ENCODE measurements at regions of chr1 and their contacts with region 1.

Region 1: DNA sequence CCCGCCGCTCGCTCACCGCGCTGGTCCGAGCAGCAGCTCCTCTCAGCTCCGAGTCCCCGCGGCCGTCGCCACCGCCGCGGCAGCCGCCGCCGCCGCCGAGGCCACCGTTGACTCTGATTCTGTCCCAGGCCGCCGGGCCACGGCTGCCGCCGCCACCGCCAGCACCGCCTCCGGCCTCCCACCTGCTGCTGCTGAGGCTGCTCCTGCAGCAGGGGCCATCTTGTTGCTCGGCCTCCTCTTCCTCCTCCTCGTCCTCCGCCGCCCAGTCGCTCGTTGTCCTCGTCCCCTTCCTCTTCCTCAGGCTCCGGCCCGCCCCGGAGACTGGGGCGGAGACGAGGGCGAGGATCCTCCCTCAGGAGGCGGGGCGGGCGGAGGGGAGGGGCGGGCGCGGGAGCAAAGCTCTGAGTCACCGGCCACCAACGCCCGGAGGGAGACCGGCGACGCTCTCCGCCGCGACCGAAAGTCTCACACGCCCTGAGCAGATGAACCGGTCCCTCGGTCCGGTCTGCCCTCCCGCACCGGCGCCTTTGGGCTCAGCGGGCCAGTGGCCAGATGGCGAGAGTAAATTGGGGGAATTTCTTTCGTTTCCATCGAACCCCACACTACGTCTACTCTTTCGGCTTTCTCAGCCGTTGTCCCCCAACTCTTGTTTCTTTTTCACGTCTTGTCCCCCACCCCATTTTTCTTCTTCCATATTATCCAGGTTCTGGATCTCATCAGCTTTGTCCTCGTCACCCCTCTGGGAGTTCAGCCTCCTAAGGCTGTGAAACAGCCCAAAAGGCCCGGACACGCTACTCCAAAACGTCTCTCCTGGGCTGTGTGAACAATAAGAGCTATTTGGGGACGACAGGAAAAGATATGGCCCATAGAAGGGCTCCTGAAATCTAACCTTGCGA is at the start of gene RC3H1:
- DNase-seq: peak; percentile 95
- H3K4me3 ChIP-seq: peak within 1 kb of the TSS; percentile 76 to 93 (median 85)
- H3K27ac ChIP-seq: peak within 1 kb of the TSS; percentile 95 to 99 (median 98)
- H3K4me1 ChIP-seq: peaks cover 40 to 47% (median 44%) of the 10 kb centered on the region in 4 donors
- H3K27me3 ChIP-seq: no peaks in the 10 kb centered on the region
- CTCF ChIP-seq: no peak
- EP300 ChIP-seq: no peak
- POLR2A ChIP-seq: peak; percentile 98
- total RNA-seq, gene RC3H1: 17.9 to 37.9 (median 33.1) TPM

Region 2: DNA sequence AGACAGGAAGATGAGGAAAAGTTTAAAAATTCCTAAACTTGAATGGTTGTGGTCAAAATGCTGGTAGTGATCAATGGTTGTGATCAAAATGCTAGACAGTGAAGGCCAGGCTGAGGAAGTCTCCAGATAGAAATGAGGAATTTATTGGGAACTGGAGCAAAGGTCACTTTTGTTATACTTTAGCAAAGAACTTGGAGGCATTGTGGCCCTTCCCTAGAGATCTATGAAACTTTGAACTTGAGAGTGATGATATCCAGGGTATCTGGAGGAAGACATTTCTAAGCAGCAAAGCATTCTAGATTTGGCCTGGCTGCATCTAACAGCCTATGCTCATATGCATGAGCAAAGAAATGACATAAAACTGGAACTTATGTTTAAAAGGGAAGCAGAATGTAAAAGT is 101.5 kb after region 1 on chr1:
- in situ Hi-C with region 1: no loop called
- intact Hi-C with region 1: no loop called
- DNase-seq: no peak
- H3K4me3 ChIP-seq: no peak overlapping the region
- H3K27ac ChIP-seq: no peak overlapping the region
- H3K4me1 ChIP-seq: no peaks in the 10 kb centered on the region
- H3K27me3 ChIP-seq: no peaks in the 10 kb centered on the region
- CTCF ChIP-seq: no peak
- EP300 ChIP-seq: no peak
- POLR2A ChIP-seq: no peak

Region 3: DNA sequence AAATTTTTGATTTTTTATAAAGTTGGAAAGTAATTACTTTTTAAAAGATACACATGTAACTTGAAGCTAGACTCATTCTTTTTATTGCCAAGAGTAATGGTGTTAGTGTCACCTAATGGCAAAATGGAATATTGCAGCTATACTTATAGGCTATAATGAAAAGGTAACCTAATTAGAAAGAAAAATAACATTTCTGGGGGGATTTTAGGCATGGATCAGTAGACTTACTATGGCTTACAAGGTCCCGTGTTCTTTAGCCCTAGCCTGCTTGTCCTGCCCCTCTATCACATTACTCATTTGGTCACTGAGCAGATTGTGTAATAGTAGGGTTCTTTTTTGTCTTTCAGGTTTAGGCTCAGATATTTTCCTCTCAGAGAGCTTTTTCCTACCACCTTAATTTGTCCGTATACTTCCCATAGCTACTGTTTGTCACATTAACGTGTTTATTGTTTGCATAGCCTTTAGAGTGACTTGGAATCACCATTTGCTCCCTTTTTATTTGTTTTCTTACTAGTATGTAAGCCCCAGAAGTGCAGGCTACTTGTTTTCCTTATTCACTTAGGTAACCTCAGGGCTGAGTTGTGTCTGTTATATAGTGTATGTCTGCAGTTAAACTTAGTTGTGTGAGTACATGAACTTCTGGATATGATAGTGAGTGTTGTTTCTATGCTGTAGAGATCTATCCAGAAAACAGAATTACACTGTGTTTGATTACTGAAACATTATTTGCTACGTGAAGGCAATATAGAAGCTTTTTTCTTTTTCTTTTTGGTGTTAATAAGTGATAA is 195.7 kb after region 1 on chr1:
- in situ Hi-C with region 1: loop called in 1 of 4 experiments (anchors 25 kb)
- intact Hi-C with region 1: no loop called
- DNase-seq: no peak
- H3K4me3 ChIP-seq: no peak overlapping the region
- H3K27ac ChIP-seq: no peak overlapping the region
- H3K4me1 ChIP-seq: peaks cover 0 to 4% (median 0%) of the 10 kb centered on the region in 4 donors
- H3K27me3 ChIP-seq: no peaks in the 10 kb centered on the region
- CTCF ChIP-seq: peak; percentile 64 to 78 (median 72)
- EP300 ChIP-seq: no peak
- POLR2A ChIP-seq: no peak